GM13977 (cell line): ENCODE measurements at regions of chr17 and their contacts with region 1.

Region 1: GRCh38 chr17:50640701-50641351 is 6.1 kb downstream of the ABCC3 start:
- DNase-seq: no peak
- CTCF ChIP-seq: no peak

Region 2: GRCh38 chr17:50482516-50482915 is 158.3 kb before region 1 on chr17:
- in situ Hi-C with region 1: loop called (anchors 10 kb)
- DNase-seq: peak; percentile 84
- CTCF ChIP-seq: peak; percentile 92